ENCODE measurements at regions of chr14 and their contacts with region 1.

Region 1: GRCh38 chr14:61252369-61253063 is 28.6 kb downstream of the TMEM30B start:
- DNase-seq: peak; percentile 81
- H3K4me3 ChIP-seq: no peak overlapping the region
- H3K4me3 Mint-ChIP-seq: no peak overlapping the region
- H3K27ac Mint-ChIP-seq: no peak overlapping the region
- H3K4me1 ChIP-seq: 0 out of 2 replicates have a peak, but pooled peaks cover 4% of the 10 kb centered on the region
- H3K4me1 Mint-ChIP-seq: no peaks in the 10 kb centered on the region
- H3K27me3 ChIP-seq: no peaks in the 10 kb centered on the region
- H3K27me3 Mint-ChIP-seq: peaks cover 9% of the 10 kb centered on the region
- CTCF ChIP-seq: peak; percentile 72 to 91

Region 2: GRCh38 chr14:60349663-60350365 is 902.7 kb before region 1 on chr14:
- CTCF ChIA-PET with region 1: no interaction called
- POLR2A ChIA-PET with region 1: no interaction called
- intact Hi-C with region 1: loop called (anchors 10 kb)
- DNase-seq: peak in 1 of 2 experiments; percentile 33
- H3K4me3 ChIP-seq: no peak overlapping the region
- H3K4me3 Mint-ChIP-seq: no peak overlapping the region
- H3K27ac Mint-ChIP-seq: no peak overlapping the region
- H3K4me1 ChIP-seq: no peaks in the 10 kb centered on the region
- H3K4me1 Mint-ChIP-seq: no peaks in the 10 kb centered on the region
- H3K27me3 ChIP-seq: no peaks in the 10 kb centered on the region
- H3K27me3 Mint-ChIP-seq: peaks cover 8% of the 10 kb centered on the region
- CTCF ChIP-seq: peak; percentile 53 to 54

Region 3: DNA sequence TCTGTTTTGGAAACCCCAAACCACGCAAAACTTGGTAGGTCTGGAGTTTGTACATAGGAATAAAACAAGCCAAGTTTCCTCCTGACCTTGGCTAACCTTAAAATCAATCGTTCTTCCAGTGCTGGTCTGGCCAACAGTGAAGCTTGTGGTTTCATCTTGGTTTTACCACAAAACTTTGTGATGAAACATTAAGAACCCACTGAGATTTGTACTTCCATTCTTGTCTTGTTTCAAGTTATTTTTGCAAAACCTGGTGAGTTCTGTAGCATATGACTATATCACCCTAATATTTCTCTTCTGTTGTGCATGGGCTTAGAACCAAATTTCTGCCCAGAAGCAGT is 629.6 kb before region 1 on chr14:
- CTCF ChIA-PET with region 1: interaction called, 7 read pairs
- POLR2A ChIA-PET with region 1: no interaction called
- intact Hi-C with region 1: loop called (anchors 1 kb)
- DNase-seq: no peak
- H3K4me3 ChIP-seq: no peak overlapping the region
- H3K4me3 Mint-ChIP-seq: no peak overlapping the region
- H3K27ac Mint-ChIP-seq: no peak overlapping the region
- H3K4me1 ChIP-seq: peaks cover 6% of the 10 kb centered on the region
- H3K4me1 Mint-ChIP-seq: peaks cover 1% of the 10 kb centered on the region
- H3K27me3 ChIP-seq: no peaks in the 10 kb centered on the region
- H3K27me3 Mint-ChIP-seq: no peaks in the 10 kb centered on the region
- CTCF ChIP-seq: no peak

Region 4: DNA sequence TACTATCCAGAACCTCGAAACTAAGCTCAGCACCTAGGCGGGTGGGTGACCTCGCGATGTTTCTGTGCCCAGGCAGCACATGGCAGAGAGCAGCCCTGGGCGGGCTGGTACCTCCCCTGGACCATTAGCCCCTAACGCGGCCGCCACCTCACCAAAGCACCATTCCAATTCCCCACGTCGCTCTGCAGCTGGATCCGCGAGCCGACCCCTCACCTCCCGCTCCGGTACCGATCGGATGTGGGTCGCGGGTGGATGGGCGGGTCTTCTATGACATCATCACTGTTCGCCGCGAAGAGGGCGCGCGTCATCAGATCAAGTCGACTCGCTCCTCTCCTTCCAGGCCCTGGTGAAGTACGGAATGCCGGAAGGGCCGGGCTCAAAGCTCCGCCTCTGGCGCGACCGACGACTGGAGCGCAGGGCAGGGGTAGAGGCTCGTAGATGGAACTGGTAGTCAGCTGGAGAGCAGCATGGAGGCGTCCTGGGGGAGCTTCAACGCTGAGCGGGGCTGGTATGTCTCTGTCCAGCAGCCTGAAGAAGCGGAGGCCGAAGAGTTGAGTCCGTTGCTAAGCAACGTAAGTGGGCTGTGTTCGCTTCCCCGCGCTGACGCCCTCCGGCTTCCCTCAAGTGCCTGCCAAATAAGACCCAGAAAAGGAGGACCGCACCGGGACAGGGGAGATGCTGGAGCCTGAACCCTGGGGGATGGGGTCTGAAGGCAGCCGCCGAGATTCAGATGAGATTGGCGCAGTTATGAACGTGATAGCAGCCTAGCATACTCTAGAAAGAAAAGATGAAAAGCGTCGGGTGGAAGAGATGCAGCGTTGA is 271.5 kb before region 1 on chr14 and contains the starts of genes SLC38A6 and TRMT5:
- CTCF ChIA-PET with region 1: no interaction called
- POLR2A ChIA-PET with region 1: no interaction called
- intact Hi-C with region 1: loop called (anchors 1 kb)
- DNase-seq: peak; percentile 94 to 95
- H3K4me3 ChIP-seq: peak within 1 kb of the TSS; percentile 81
- H3K4me3 Mint-ChIP-seq: no peak within 1 kb of the TSS
- H3K27ac Mint-ChIP-seq: no peak within 1 kb of the TSS
- H3K4me1 ChIP-seq: peaks cover 6% of the 10 kb centered on the region; the same call in 1 of the 2 replicates
- H3K4me1 Mint-ChIP-seq: no peaks in the 10 kb centered on the region
- H3K27me3 ChIP-seq: no peaks in the 10 kb centered on the region
- H3K27me3 Mint-ChIP-seq: no peaks in the 10 kb centered on the region
- CTCF ChIP-seq: no peak
- total RNA-seq, gene SLC38A6: 10.2 and 11.5 TPM in 2 replicates
- total RNA-seq, gene TRMT5: 16.3 and 16.5 TPM in 2 replicates

Region 5: GRCh38 chr14:61234215-61234916 is 18.1 kb before region 1 on chr14:
- CTCF ChIA-PET with region 1: no interaction called
- POLR2A ChIA-PET with region 1: no interaction called
- intact Hi-C with region 1: no loop called
- DNase-seq: no peak
- H3K4me3 ChIP-seq: no peak overlapping the region
- H3K4me3 Mint-ChIP-seq: no peak overlapping the region
- H3K27ac Mint-ChIP-seq: no peak overlapping the region
- H3K4me1 ChIP-seq: no peaks in the 10 kb centered on the region
- H3K4me1 Mint-ChIP-seq: no peaks in the 10 kb centered on the region
- H3K27me3 ChIP-seq: no peaks in the 10 kb centered on the region
- H3K27me3 Mint-ChIP-seq: peaks cover 12% of the 10 kb centered on the region
- CTCF ChIP-seq: no peak

Measured in Caco-2 (cell line).